ENCODE measurements at regions of chr4 and their contacts with region 1.

Region 1: DNA sequence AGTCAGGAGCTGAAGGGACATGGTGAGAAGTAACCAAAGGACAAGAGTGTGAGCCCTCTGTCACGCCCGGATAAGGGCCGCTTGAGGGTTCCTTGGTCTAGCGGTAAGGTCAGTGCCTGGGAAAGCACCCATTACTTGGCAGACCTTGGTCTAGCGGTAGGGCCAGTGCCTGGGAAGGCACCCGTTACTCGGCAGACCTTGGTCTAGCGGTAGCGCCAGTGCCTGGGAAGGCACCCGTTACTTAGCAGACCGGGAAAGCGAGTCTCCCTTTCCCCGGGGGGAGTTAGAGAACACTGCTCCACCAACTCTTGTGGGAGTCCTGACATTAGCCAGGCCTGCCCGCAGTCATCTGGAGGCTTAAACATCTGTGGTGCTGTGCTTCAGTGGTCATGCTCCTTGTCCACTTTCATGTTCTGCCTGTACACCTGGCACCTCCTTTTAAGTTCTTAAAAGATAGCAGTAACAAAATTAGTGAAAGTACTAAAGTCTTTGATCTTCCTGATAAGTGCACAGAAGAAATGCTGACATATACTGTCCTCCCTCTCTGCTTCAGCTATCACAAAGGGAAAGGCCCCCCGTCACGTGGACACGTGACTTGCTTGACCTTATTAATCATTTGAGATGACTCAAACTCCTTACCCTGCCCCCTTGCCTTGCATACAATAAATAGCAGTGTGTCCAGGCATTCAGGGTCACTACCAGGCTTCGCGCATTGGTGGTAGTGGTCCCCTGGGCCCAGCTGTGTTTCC is 9.3 kb upstream of the SEC24B start:
- DNase-seq: no peak
- ATAC-seq: no peak
- H3K4me3 ChIP-seq: no peak overlapping the region
- H3K27ac ChIP-seq: no peak overlapping the region
- H3K4me1 ChIP-seq: no peaks in the 10 kb centered on the region
- H3K27me3 ChIP-seq: peaks cover 0 to 2% (median 0%) of the 10 kb centered on the region in 3 donors
- CTCF ChIP-seq: no peak

Region 2: GRCh38 chr4:109462297-109462696 is 38.0 kb after region 1 on chr4:
- intact Hi-C with region 1: no loop called
- DNase-seq: no peak
- ATAC-seq: peak in 1 of 4 donors; percentile 26
- H3K4me3 ChIP-seq: no peak overlapping the region
- H3K27ac ChIP-seq: no peak overlapping the region
- H3K4me1 ChIP-seq: peaks cover 16% of the 10 kb centered on the region
- H3K27me3 ChIP-seq: no peaks in the 10 kb centered on the region
- CTCF ChIP-seq: no peak

Region 3: DNA sequence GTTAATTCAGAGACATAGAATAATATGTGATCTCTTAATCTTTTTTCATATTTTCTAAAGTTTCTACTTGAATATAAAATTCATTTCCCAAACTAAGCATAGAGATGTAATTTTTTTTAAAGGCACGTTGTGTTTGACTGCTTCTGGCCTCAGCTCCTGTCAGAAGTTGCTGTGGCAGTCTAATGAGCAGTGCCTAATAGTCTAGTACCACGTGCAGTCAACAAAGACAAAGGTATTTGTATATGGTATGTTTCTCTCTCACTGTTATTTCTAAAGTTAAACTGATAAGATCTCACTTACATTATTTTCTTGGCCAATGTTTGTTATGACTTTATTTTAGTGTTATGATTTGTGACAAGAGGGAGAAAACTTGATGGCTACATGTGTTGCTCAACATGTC is 87.1 kb after region 1 on chr4:
- intact Hi-C with region 1: loop called in 1 of 2 experiments (anchors 5 kb)
- DNase-seq: no peak
- ATAC-seq: no peak
- H3K4me3 ChIP-seq: no peak overlapping the region
- H3K27ac ChIP-seq: no peak overlapping the region
- H3K4me1 ChIP-seq: no peaks in the 10 kb centered on the region
- H3K27me3 ChIP-seq: no peaks in the 10 kb centered on the region
- CTCF ChIP-seq: no peak

Region 4: GRCh38 chr4:109548655-109549054 is 124.4 kb after region 1 on chr4:
- intact Hi-C with region 1: loop called in 1 of 2 experiments (anchors 10 kb)
- DNase-seq: no peak
- ATAC-seq: peak; percentile 13 to 52 (median 28)
- H3K4me3 ChIP-seq: no peak overlapping the region
- H3K27ac ChIP-seq: peak overlapping the region; percentile 38
- H3K4me1 ChIP-seq: no peaks in the 10 kb centered on the region
- H3K27me3 ChIP-seq: no peaks in the 10 kb centered on the region
- CTCF ChIP-seq: no peak

Region 5: DNA sequence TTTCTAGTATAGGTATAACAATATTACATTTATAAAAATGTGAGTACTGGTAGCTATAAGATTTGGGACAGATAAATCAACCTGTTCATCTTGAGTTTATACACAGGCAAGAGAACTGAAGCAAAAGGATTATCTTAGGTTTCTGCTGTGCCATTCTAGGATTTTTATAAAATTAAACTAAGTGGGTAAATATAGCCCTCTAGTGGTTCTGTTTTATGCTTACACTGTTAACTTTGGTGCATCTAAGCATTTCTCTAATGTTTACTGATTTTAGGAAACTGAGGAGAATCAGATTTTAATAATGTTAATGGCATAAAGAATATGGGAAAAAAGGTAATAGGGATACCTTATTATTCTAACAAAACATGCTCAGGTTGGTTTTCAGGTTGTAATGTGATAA is 402.5 kb after region 1 on chr4:
- intact Hi-C with region 1: loop called in 1 of 2 experiments (anchors 5 kb)
- DNase-seq: no peak
- ATAC-seq: peak in 1 of 4 donors; percentile 56
- H3K4me3 ChIP-seq: no peak overlapping the region
- H3K27ac ChIP-seq: no peak overlapping the region
- H3K4me1 ChIP-seq: no peaks in the 10 kb centered on the region
- H3K27me3 ChIP-seq: no peaks in the 10 kb centered on the region
- CTCF ChIP-seq: peak; percentile 53

Measured in psoas muscle (tissue), 8 donors.